ENCODE measurements at regions of chr4 and their contacts with region 1.

Region 1: GRCh38 chr4:159175085-159175988 is 72.5 kb downstream of the RAPGEF2 start:
- DNase-seq: peak; percentile 69
- H3K4me3 Mint-ChIP-seq: no peak overlapping the region
- H3K27ac Mint-ChIP-seq: no peak overlapping the region
- H3K4me1 Mint-ChIP-seq: peaks cover 56% of the 10 kb centered on the region
- H3K27me3 Mint-ChIP-seq: no peaks in the 10 kb centered on the region

Region 2: DNA sequence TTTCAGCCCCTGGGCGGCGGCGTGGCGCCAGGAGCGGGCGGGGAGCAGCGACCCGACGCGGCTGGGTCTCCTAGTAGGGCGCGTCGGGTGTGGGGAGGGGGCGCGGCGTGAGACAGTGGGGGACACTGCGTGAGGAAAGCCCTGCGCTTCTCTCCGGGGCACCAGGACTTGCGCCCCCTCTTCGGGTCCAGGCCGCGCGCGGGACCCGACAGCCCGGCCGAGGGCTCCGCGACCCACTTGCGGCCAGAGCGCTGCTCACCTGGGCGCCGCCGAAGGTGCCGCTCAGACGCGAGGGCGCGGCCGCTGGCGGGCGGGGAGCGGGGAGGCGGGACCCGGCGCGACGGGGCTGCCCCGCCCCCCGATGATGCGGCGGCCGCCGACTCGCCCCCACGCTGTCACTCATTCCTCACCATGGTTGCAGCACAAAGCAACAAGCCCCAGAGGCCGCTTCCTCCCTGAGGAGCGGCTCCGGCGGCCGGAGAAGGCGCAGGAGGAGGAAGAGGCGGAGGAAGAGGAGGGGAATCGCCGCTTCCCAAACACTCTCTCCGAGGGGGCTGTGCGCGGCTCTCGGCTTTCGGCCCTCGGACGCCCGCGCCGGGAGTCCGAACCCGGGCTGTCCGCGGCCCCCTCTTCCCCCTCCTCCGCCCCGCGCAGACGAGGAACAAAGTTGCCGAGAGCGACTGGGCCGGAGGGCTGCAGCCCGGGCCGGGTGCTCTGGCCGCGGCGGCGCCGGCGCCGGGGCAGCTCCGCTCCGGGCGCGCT is 72.5 kb before region 1 on chr4 and contains the start of gene RAPGEF2:
- CTCF ChIA-PET with region 1: interaction called, 3 read pairs
- POLR2A ChIA-PET with region 1: no interaction called
- intact Hi-C with region 1: loop called (anchors 1 kb)
- DNase-seq: peak; percentile 91
- H3K4me3 Mint-ChIP-seq: peak within 1 kb of the TSS; percentile 79
- H3K27ac Mint-ChIP-seq: peak within 1 kb of the TSS; percentile 81
- H3K4me1 Mint-ChIP-seq: peaks cover 46% of the 10 kb centered on the region
- H3K27me3 Mint-ChIP-seq: peaks cover 5% of the 10 kb centered on the region
- total RNA-seq, gene RAPGEF2: 18.6 to 22.0 TPM

Region 3: DNA sequence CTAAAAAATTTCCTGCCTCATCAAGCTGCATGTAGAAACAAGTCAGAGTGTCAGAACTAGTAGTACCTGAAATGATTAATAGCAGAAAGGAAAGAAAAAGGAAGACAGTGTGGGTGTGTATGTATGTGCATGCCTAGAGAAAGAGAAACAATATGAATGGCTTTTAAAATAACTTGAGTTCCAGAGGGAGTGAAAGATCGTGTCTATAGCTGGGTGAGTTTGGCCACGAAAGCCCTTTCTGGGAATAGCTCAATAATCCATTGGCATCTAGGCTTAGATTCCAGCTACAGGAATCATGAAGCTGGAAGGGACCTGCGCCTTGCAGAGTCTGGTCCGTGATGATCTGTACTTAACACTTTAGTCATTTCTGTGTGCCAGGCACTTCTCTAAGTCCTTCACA is 123.2 kb after region 1 on chr4:
- CTCF ChIA-PET with region 1: no interaction called
- POLR2A ChIA-PET with region 1: no interaction called
- intact Hi-C with region 1: no loop called
- DNase-seq: no peak
- H3K4me3 Mint-ChIP-seq: no peak overlapping the region
- H3K27ac Mint-ChIP-seq: no peak overlapping the region
- H3K4me1 Mint-ChIP-seq: peaks cover 18% of the 10 kb centered on the region
- H3K27me3 Mint-ChIP-seq: no peaks in the 10 kb centered on the region

Region 4: GRCh38 chr4:159446266-159446976 is 271.1 kb after region 1 on chr4:
- CTCF ChIA-PET with region 1: no interaction called
- POLR2A ChIA-PET with region 1: no interaction called
- intact Hi-C with region 1: loop called (anchors 5 kb)
- DNase-seq: peak; percentile 28
- H3K4me3 Mint-ChIP-seq: no peak overlapping the region
- H3K27ac Mint-ChIP-seq: no peak overlapping the region
- H3K4me1 Mint-ChIP-seq: no peaks in the 10 kb centered on the region
- H3K27me3 Mint-ChIP-seq: peaks cover 9% of the 10 kb centered on the region

Measured in activated CD4-positive, alpha-beta memory T cell treated with anti-CD3 and anti-CD28 coated beads for 36 hours (primary cell).